WTC11 (cell line): ENCODE measurements at regions of chr12 and their contacts with region 1.

Region 1: DNA sequence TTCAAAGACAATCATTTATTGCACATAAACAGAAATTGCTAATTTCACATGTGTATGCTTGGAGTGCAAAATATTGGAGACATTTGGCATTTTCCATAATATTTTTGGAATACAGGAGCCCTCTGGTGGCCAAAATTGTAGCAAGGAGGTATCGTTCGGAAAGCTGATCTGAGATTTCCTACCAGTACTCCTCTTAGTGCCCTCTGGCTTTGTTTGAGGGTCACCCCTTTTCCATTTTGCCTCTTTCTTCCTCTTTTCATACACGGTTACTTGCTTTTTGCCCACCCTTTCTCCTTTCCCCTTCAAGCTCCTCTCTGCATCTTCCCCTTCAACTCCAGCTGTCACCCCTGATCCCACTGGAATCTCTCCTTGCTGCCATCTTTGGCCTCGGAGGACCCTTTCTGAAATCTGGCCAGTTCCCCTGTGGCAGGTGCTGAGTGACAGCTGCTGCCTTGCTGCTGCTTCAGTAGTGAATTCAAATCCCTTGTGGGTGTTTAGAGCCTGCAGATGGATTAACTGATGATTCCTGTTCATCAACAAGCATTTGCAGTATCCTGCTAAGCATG is 164.6 kb upstream of the PARP11 start:
- DNase-seq: peak; percentile 30
- ATAC-seq: peak; percentile 58
- H3K4me3 Mint-ChIP-seq: no peak overlapping the region
- H3K27ac Mint-ChIP-seq: no peak overlapping the region
- H3K4me1 Mint-ChIP-seq: peaks cover 26% of the 10 kb centered on the region
- H3K27me3 Mint-ChIP-seq: peaks cover 23% of the 10 kb centered on the region
- CTCF ChIP-seq: peak; percentile 47

Region 2: DNA sequence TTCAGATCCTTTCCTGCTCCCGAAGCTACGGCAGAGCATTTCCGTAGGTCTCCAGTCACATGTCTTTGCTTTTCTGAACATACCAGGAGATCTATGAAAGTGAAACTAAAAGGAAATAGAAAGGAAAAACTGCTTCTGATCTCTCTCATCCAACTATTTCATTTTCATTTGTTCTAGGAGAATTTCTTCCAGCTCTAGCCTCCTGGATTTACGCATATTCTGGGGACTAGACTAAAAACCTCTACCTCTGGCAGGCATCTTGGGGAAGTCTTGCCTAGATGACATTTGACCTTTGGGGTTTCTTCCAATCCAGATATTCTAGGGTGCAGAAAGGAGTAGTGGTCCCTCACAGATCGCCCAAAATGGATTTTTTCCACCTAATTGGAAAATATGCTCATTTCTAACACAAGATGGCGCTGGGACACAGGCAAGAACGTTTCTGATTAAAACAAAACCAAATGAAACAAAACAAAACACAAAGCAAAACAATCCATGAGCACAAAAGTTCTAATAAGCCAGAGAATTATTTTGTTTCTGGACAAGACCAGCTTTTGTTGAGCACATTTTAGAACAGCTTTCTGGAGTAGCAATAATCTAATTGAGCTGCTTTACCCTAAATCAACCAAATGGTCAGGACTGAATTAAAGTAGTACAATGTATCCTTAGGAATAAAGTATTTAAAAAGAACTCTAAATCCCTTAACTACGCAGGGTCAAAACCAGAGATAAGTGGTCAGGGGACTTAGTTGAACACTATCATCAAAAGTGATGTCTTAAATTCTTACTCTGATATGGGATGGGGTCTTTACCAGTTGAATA is 152.3 kb before region 1 on chr12:
- CTCF ChIA-PET with region 1: interaction called, 11 read pairs
- POLR2A ChIA-PET with region 1: interaction called, 4 read pairs
- DNase-seq: no peak
- ATAC-seq: no peak
- H3K4me3 Mint-ChIP-seq: no peak overlapping the region
- H3K27ac Mint-ChIP-seq: no peak overlapping the region
- H3K4me1 Mint-ChIP-seq: peaks cover 20% of the 10 kb centered on the region
- H3K27me3 Mint-ChIP-seq: no peaks in the 10 kb centered on the region; the same call in 1 of the 2 replicates
- CTCF ChIP-seq: peak; percentile 57; the same call in 1 of the 2 replicates

Region 3: GRCh38 chr12:3964439-3964838 is 73.4 kb before region 1 on chr12:
- CTCF ChIA-PET with region 1: interaction called, 43 read pairs
- POLR2A ChIA-PET with region 1: no interaction called
- DNase-seq: peak; percentile 71
- ATAC-seq: peak; percentile 90
- H3K4me3 Mint-ChIP-seq: no peak overlapping the region
- H3K27ac Mint-ChIP-seq: no peak overlapping the region
- H3K4me1 Mint-ChIP-seq: peaks cover 17% of the 10 kb centered on the region
- H3K27me3 Mint-ChIP-seq: no peaks in the 10 kb centered on the region; the same call in 1 of the 2 replicates
- CTCF ChIP-seq: peak; percentile 11; the same call in 1 of the 2 replicates

Region 4: DNA sequence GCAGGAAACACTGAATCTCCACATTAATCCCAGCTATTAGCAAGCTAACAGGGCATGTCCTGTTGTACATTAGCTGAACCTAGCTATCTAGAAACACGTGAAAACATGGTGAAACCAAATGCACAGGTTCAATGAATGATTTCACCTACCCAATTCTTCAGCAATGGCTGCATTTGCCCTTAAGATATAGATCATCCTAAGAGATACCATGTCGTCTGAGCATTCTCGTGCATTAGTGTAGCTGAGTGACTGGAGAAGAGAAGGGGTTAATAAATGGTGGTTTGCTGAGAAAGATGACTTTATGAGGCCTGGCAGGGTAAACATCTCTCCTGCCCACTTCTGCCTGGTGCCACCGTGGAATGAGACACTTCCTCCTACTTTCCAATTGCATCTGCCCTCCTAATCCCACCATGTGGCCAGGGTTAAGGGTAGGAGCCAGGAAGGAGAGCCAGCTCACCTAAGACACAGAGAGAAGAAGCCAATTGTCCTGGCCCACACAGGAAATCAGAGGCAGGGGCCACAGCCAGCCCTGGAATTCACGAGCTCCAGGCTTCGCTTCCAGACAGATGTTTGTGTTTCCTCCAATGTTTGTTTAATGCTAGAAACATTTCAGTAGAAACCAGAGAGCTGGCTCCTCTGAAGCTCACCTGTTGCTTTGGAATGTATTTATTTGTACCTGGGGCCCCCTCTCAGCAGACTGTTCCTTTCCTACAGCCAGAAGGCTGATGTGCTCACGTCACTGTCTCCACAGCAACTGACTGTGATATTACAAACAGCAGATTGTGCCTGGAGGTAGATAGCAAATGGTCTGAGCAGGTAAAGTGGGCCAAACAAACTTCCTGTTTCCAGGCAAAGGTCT is 38.6 kb before region 1 on chr12:
- CTCF ChIA-PET with region 1: interaction called, 36 read pairs
- POLR2A ChIA-PET with region 1: interaction called, 12 read pairs
- DNase-seq: no peak
- ATAC-seq: no peak
- H3K4me3 Mint-ChIP-seq: no peak overlapping the region
- H3K27ac Mint-ChIP-seq: no peak overlapping the region
- H3K4me1 Mint-ChIP-seq: peaks cover 25% of the 10 kb centered on the region
- H3K27me3 Mint-ChIP-seq: peaks cover 14% of the 10 kb centered on the region
- CTCF ChIP-seq: no peak

Region 5: DNA sequence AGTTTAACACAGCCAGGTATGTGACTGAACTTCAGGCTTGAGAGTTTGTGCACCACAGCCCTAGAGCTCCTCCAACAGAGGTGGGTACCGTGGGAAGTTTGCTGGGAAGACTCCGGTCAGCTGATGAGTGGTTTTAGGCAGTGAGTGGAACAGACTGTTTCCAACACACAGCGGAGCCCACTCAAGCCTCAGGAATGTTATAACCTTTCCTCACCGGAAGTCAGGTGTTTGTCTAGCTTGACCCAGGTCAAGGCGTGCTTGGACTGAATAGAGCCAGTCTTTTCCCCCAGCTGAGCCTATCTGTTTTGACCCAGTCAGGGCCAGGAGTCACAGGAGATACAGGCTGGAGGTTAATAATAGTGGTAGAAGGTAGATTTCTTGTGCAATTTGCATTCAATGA is 26.2 kb before region 1 on chr12:
- CTCF ChIA-PET with region 1: interaction called, 11 read pairs
- POLR2A ChIA-PET with region 1: no interaction called
- DNase-seq: no peak
- ATAC-seq: no peak
- H3K4me3 Mint-ChIP-seq: no peak overlapping the region
- H3K27ac Mint-ChIP-seq: no peak overlapping the region
- H3K4me1 Mint-ChIP-seq: peaks cover 17% of the 10 kb centered on the region
- H3K27me3 Mint-ChIP-seq: peaks cover 12% of the 10 kb centered on the region
- CTCF ChIP-seq: no peak

Region 6: DNA sequence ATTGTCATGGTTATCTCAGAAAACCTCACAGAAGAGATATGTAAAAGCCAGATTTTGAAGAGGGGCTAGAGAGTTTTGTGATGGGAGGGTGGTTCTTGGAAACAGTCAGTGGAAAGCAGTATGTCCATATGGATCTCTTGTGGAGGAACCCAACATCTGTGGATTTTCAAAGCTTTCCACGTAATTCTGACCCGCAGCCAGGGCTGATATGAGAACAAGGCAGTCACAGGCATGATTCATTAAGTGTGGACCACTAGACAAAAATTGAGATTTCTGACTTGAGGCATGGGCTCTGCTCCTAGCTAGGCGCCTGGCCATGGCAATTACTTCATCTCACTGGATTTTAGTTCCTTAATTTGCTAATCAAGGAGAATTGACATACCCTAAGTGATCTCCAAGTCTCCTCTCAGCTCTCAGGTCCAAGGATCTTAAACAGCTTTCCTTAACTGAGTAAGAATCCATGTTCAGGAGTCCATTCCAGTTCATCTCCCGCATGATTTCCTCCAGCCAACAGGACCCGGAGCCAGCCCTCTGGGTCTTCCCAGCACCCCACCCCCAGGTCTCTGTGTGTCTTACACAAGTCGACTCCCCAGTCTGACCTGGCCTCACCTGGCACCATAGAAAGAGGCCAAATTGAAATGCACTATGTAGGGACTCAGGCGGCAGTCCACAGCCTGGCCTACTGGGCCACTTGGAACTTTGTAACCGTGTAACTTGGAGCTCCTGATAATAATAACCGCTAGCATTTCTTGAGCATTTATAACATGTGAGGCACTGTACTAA is 11.7 kb after region 1 on chr12:
- CTCF ChIA-PET with region 1: interaction called, 15 read pairs
- POLR2A ChIA-PET with region 1: interaction called, 5 read pairs
- DNase-seq: no peak
- ATAC-seq: no peak
- H3K4me3 Mint-ChIP-seq: no peak overlapping the region
- H3K27ac Mint-ChIP-seq: no peak overlapping the region
- H3K4me1 Mint-ChIP-seq: peaks cover 32% of the 10 kb centered on the region
- H3K27me3 Mint-ChIP-seq: no peaks in the 10 kb centered on the region; the same call in 1 of the 2 replicates
- CTCF ChIP-seq: no peak

Region 7: GRCh38 chr12:4068981-4069669 is 31.3 kb after region 1 on chr12:
- CTCF ChIA-PET with region 1: no interaction called
- POLR2A ChIA-PET with region 1: no interaction called
- DNase-seq: no peak
- ATAC-seq: no peak
- H3K4me3 Mint-ChIP-seq: no peak overlapping the region
- H3K27ac Mint-ChIP-seq: no peak overlapping the region
- H3K4me1 Mint-ChIP-seq: no peaks in the 10 kb centered on the region
- H3K27me3 Mint-ChIP-seq: no peaks in the 10 kb centered on the region
- CTCF ChIP-seq: no peak